AG04450 (cell line): ENCODE measurements at regions of chr4 and their contacts with region 1.

Region 1: DNA sequence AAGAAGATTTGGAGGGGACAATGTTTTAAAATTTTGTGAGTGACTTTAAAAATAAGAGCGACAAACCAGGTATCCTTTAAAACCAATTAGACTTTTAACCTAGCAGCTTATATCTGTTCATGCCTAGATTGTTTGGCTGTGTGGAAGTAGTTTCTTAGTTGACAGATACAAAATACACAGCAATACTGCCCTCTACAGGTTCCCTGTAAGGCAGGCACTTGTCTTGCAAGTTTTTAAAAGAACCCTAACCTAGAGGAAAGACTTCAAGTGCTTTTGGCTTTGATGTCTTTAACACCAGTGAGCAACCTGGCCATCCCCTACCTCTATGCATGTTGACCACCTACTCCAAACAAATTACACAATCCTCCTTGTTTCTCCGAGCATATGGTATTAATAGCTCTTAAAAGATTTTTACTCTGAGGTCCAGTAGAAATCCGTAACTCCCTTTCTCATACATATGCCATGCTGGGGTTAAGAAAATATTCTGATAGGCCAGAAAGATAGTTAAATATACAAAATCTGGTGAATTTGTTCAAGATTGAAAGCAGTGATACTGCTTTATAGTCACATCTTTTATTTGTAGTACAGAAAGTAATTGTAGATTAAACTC is 273.0 kb downstream of the ARHGAP24 start:
- DNase-seq: peak; percentile 50
- H3K4me3 ChIP-seq: no peak overlapping the region
- H3K27ac ChIP-seq: no peak overlapping the region
- H3K27me3 ChIP-seq: no peaks in the 10 kb centered on the region
- CTCF ChIP-seq: peak; percentile 92

Region 2: DNA sequence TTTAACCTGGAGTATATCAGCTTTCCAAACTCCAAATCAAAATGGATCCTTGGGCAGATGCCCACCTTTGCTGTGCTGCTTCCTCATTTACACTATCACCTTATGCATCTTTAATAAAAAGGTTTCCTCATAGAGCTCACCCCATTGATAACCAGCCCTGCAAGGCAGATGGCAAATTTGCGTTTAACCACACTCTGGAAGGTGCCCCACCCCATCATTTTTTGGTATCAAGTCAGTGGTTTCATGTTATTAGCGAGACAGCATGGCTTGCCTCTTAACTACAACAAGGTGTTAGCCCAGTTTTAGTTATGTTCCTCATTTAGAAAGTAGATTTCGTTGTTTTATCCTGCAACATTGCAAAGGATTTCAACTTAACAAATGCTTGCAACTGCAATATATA is 567.5 kb before region 1 on chr4:
- CTCF ChIA-PET with region 1: no interaction called
- POLR2A ChIA-PET with region 1: no interaction called
- DNase-seq: no peak
- H3K4me3 ChIP-seq: no peak overlapping the region
- H3K27ac ChIP-seq: no peak overlapping the region
- H3K27me3 ChIP-seq: no peaks in the 10 kb centered on the region
- CTCF ChIP-seq: no peak

Region 3: GRCh38 chr4:85681221-85681657 is 66.7 kb before region 1 on chr4:
- CTCF ChIA-PET with region 1: no interaction called
- POLR2A ChIA-PET with region 1: no interaction called
- DNase-seq: peak; percentile 34
- H3K4me3 ChIP-seq: no peak overlapping the region
- H3K27ac ChIP-seq: no peak overlapping the region
- H3K27me3 ChIP-seq: no peaks in the 10 kb centered on the region
- CTCF ChIP-seq: no peak

Region 4: GRCh38 chr4:85732124-85732523 is 15.9 kb before region 1 on chr4:
- CTCF ChIA-PET with region 1: interaction called, 15 read pairs
- POLR2A ChIA-PET with region 1: no interaction called
- DNase-seq: no peak
- H3K4me3 ChIP-seq: no peak overlapping the region
- H3K27ac ChIP-seq: no peak overlapping the region
- H3K27me3 ChIP-seq: no peaks in the 10 kb centered on the region
- CTCF ChIP-seq: no peak

Region 5: GRCh38 chr4:85769009-85769408 is 21.0 kb after region 1 on chr4:
- CTCF ChIA-PET with region 1: interaction called, 11 read pairs
- POLR2A ChIA-PET with region 1: no interaction called
- DNase-seq: no peak
- H3K4me3 ChIP-seq: no peak overlapping the region
- H3K27ac ChIP-seq: no peak overlapping the region
- H3K27me3 ChIP-seq: no peaks in the 10 kb centered on the region
- CTCF ChIP-seq: no peak

Region 6: DNA sequence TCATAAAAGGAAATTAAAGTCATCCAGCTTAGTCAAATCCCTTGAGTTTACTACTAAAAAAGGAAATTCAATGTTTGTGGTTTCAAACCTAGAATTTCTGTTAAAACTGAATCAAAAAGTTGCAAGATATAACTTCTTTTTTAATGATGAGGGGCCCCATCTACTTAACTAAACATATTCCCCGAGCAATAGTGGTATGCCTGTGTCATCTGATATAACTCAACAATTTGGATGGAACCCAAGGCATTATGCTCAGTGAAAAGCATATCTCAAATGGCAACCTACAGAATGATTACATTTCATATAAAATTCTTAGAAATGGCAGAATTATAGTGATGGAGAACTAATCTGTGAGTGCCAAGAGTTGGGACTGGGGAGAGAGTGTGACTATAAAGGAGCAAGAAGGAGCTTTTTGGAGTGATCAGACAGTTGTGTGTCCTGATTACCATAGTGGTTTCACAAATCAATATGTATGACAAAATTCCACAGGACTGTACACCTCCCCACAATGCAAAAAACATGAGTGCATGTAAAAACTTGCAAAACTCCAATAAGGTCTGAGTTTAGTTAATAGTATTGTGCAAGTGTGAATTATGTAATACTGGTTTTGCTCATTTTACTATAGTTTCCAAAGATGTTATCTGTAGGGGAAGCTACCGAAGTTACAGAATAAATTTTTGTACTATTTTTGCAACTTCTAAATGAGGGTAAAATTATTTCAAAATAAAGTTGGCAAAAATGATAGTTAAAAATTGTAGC is 50.2 kb after region 1 on chr4:
- CTCF ChIA-PET with region 1: interaction called, 17 read pairs
- POLR2A ChIA-PET with region 1: no interaction called
- DNase-seq: no peak
- H3K4me3 ChIP-seq: no peak overlapping the region
- H3K27ac ChIP-seq: no peak overlapping the region
- H3K27me3 ChIP-seq: no peaks in the 10 kb centered on the region
- CTCF ChIP-seq: no peak

Region 7: DNA sequence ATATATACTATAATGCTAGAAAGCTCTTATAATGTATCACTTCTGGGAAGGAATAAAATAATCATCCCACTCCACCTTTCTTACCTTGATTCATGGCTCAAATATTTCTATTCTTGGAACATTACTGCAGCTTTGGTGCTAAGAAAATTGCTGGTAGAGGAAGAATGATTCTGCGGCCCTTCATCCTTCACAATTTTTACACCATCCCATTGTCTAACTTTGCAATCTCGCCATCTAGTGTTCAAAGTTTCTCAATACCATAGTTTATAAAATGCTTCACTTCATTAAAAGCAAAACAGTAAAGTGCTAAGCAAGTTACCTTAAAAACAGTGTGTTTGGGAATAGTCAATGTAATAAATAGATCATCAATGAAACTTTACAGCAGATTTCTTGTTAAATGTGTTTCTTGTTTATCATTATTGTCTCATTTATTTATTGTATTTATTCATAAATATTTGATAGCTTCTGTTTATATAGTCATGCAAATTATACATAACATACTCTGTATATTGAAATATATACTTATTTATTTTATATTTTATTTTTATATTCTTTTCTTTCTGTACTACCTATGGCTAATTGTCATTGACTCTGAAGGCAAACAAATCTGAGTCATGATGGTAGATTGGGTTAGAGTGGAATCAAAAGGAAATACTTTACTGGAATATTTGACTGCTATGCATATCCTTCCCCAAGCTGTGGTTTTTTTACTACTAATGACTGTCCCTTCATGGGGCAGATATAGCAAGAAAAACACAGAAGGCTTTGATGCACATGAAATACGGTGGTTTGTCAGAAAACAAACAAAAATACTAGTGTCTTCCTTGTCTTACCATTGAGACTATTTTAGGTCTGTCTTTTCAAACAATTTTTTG is 221.2 kb after region 1 on chr4:
- CTCF ChIA-PET with region 1: interaction called, 29 read pairs
- POLR2A ChIA-PET with region 1: no interaction called
- DNase-seq: peak; percentile 15
- H3K4me3 ChIP-seq: no peak overlapping the region
- H3K27ac ChIP-seq: no peak overlapping the region
- H3K27me3 ChIP-seq: no peaks in the 10 kb centered on the region
- CTCF ChIP-seq: peak; percentile 67

Region 8: GRCh38 chr4:86043755-86044592 is 296.0 kb after region 1 on chr4:
- CTCF ChIA-PET with region 1: interaction called, 10 read pairs
- POLR2A ChIA-PET with region 1: no interaction called
- DNase-seq: no peak
- H3K4me3 ChIP-seq: no peak overlapping the region
- H3K27ac ChIP-seq: no peak overlapping the region
- H3K27me3 ChIP-seq: no peaks in the 10 kb centered on the region
- CTCF ChIP-seq: peak; percentile 69